GM12878 (cell line): ENCODE measurements at regions of chr6 and their contacts with region 1.

Region 1: DNA sequence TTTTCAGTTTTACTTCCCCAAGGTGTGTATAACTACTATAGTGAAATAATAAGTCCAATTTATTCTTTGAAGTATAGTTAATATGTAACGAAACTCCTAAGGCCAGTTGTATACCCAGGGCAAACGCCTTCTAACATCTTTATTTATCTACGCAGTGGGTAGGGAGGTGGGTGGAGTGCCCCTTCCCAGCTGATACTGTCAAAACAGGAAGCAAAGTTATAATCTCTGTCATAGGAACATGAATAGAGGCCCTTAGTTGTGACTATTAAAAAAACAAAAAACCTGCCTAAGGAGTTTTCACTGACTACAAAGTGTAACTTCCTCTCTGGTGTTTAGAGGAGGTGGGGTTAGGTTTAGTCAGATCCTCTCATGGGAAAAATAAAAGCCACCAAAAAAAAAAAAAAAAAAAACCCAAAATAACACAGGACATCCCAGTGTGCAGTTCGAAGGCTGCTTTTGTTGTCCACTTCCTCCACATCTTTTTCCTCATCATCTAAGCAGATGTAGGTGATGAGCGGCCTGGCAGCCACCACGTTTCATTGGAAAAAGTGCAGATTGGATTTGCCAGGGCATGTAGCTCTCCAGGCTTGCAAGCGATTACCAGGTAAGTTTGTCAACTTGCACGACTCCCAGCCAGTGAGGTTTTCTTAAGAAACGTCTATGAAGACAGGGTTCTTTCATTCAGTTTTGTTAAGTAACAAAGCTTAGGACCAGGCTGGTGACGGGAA is 58.7 kb downstream of the UTRN start:
- DNase-seq: peak; percentile 69
- ATAC-seq: peak; percentile 51
- H3K4me3 ChIP-seq: peak overlapping the region; percentile 82
- H3K27ac ChIP-seq: peak overlapping the region; percentile 97
- H3K4me1 ChIP-seq: peaks cover 41% of the 10 kb centered on the region
- H3K27me3 ChIP-seq: no peaks in the 10 kb centered on the region
- CTCF ChIP-seq: no peak
- EP300 ChIP-seq: peak in 1 of 2 experiments; percentile 74; a peak in 3 of 4 replicates
- POLR2A ChIP-seq: peak; percentile 35; the same call in 1 of the 2 replicates
- RAD21 ChIP-seq: no peak

Region 2: GRCh38 chr6:144305985-144306384 is 37.9 kb before region 1 on chr6:
- CTCF ChIA-PET with region 1: interaction called, 3 read pairs
- POLR2A ChIA-PET with region 1: no interaction called
- RAD21 ChIA-PET with region 1: interaction called, 3 read pairs
- SMC1A ChIA-PET with region 1: interaction called, 12 read pairs
- in situ Hi-C with region 1: no loop called
- intact Hi-C with region 1: no loop called
- DNase-seq: peak; percentile 30
- ATAC-seq: peak; percentile 93
- H3K4me3 ChIP-seq: no peak overlapping the region
- H3K27ac ChIP-seq: peak overlapping the region; percentile 50
- H3K4me1 ChIP-seq: peaks cover 9% of the 10 kb centered on the region
- H3K27me3 ChIP-seq: no peaks in the 10 kb centered on the region
- CTCF ChIP-seq: no peak
- EP300 ChIP-seq: no peak
- POLR2A ChIP-seq: no peak
- RAD21 ChIP-seq: no peak

Region 3: GRCh38 chr6:144999127-144999526 is 655.3 kb after region 1 on chr6:
- CTCF ChIA-PET with region 1: no interaction called
- POLR2A ChIA-PET with region 1: interaction called, 17 read pairs
- RAD21 ChIA-PET with region 1: no interaction called
- SMC1A ChIA-PET with region 1: no interaction called
- in situ Hi-C with region 1: no loop called
- intact Hi-C with region 1: no loop called
- DNase-seq: no peak
- ATAC-seq: no peak
- H3K4me3 ChIP-seq: no peak overlapping the region
- H3K27ac ChIP-seq: no peak overlapping the region
- H3K4me1 ChIP-seq: no peaks in the 10 kb centered on the region
- H3K27me3 ChIP-seq: no peaks in the 10 kb centered on the region
- CTCF ChIP-seq: no peak
- EP300 ChIP-seq: no peak
- POLR2A ChIP-seq: no peak
- RAD21 ChIP-seq: no peak